ENCODE measurements at regions of chr15 and their contacts with region 1.

Region 1: GRCh38 chr15:58070801-58071418 is 5.4 kb upstream of the ALDH1A2 start:
- DNase-seq: peak; percentile 68
- ATAC-seq: no peak

Region 2: DNA sequence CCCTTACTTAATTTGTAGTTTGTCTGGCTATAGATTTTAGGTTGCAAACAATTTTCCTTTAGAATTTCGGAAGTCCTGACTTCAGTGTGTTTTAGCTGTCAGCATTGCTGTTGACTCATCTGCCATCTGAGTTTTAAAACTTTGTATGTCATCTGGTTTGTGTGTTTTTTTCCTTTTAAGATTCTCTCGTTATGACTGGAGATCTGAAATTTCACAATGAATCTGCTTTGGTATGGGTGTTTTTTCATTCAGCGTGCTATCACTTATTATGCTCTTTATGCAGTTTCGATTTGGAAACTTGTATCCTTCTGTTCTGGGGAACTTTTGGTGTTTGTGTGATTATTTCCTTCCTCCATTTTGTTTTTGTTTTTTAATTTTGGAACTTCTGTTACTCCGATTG is 1283.9 kb before region 1 on chr15:
- intact Hi-C with region 1: no loop called
- DNase-seq: no peak
- ATAC-seq: no peak

Region 3: DNA sequence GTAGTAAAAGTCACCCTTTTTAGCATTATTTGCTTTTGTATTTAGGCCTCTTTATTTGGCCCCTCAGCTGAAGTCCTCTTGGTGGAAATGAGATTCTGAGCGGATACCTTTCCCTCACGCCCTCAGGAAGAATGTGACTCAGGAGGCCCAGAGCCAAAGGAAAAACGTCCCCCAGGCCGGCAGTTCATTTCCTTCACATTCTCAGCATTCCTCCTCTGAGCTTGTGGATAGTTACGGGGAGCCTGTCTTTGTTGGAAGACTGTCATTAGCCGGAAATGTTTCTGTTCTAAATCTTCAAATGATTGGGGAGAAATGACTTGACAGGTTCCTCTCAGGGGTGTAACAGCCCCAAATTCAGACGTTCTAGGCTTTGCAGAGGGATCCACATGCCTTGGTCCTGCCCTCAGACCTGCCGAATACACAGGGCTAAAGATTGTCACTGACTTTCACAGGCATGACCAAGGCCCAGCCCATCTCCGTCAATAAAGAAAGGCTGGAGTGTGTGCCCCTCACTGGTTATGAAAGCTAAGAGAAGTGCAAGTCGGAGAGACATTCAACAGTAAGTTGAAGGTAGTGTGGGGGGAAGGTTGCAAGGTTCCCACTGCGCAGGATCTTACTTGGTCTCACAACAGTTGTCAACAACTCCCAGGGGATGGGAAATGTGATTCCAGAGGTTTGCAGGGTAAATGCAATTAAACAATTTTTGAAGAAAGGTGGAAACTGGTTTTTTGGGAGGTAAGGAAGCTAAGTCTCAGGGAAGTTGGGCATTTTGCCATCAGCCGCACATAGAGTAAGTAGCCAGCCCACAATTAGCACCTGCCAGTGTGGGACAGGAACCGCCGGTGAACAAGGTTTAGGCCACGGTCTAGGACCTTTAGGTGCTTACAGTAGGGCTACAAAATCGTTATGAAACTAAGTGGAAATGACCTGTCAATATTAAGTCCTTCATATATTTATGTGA is 518.9 kb before region 1 on chr15:
- intact Hi-C with region 1: loop called (anchors 5 kb)
- DNase-seq: no peak
- ATAC-seq: no peak

Region 4: DNA sequence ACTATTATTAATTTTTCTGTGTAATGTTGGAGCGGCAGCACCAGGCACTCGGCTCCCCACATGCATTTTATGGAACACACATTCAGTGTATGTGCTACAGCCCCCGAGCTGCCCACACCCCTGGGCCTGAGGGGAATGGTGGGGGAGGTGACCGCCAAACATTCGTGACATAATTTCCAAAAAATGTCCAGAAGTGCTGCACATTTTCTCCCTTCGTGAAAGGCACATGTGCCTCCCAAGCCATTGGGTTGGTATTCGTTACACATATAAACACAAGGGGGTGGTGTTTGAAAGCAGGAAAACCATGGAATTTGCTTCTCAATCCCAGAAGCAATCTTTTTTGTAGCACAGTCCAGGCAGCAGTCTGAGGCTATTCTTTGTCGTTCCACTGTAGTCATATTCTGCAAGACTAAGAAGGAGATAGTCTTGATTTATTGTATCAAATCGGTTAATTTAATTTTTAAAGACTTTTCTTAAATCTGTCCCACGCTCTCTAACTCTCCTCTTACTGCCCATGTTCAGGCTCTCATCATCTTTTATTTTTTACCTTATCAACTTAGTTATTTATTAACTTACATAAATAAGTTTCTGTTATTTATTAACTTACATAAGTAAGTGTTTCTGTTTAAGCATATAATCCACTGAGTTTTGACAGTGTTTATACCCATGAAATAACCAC is 403.6 kb before region 1 on chr15:
- intact Hi-C with region 1: loop called (anchors 10 kb)
- DNase-seq: no peak
- ATAC-seq: peak; percentile 73

Region 5: DNA sequence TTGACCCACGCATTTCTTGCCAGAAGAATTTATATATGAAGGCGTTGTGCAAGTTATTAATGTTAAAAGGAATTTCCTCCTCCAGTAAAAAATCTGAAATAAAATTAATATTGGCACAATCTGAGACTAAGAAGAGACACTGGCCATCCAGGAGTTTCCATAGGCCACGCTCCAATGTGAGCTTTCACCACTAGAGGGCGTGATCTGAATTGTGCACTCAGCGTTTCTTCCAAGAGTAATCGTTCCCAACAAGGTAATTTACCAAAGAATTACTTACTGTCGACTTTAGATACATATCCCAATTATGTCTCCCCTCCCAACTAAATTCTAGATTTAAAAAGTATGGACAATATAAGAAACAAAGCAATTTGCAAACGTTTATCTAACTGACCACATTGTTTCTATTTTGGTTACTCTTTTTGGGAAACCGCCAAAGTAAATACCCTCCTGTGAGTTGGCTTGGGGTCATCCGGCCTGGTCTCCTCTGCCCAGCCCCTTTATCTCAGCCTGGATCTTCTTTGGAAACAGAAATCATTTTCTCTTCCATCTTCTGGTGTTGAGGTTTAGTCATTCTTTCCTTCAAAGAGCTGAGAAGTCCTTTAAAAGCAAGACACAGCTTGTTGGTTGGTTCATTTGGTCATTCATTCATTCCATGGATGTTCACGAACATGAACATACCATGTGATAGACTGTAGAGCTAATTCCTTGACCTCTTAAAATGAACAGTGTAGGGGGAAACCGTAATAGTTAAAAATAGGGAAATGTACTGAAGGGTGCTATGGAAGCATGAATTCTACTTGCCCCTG is 338.2 kb before region 1 on chr15:
- intact Hi-C with region 1: loop called (anchors 5 kb)
- DNase-seq: no peak
- ATAC-seq: no peak

Region 6: GRCh38 chr15:57751177-57751800 is 319.6 kb before region 1 on chr15:
- intact Hi-C with region 1: loop called (anchors 2 kb)
- DNase-seq: no peak
- ATAC-seq: peak; percentile 56

Region 7: DNA sequence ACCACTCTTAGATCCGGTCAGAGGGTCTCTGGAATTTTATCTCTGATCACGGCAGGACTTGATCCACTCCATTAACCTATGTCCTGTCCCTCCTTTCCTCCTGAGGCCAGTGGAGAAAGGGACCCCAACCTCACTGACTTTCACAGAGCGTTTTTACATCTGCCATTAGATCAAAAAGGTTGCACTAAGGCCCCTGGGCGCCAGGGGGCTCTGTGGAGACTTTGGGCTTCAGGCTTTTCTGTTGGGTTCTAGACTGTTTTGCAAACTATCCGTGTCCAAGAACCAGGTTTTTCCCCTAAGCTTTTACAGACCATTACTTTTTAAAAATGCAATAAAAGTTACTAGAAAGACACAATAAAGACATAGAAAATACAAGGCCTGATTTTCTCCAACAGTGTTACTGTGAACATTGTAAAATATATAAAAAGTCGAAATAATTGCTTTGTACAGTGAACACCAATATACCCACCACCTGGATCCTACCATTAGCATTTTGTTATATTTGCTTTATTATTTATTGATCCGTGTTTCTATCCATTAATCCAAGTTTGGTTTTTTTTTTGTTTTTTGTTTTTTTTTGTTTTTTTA is 204.7 kb before region 1 on chr15:
- intact Hi-C with region 1: loop called (anchors 2 kb)
- DNase-seq: peak; percentile 69
- ATAC-seq: peak; percentile 20

Region 8: GRCh38 chr15:57923306-57923705 is 147.6 kb before region 1 on chr15:
- intact Hi-C with region 1: loop called (anchors 5 kb)
- DNase-seq: no peak
- ATAC-seq: peak; percentile 85

Region 9: DNA sequence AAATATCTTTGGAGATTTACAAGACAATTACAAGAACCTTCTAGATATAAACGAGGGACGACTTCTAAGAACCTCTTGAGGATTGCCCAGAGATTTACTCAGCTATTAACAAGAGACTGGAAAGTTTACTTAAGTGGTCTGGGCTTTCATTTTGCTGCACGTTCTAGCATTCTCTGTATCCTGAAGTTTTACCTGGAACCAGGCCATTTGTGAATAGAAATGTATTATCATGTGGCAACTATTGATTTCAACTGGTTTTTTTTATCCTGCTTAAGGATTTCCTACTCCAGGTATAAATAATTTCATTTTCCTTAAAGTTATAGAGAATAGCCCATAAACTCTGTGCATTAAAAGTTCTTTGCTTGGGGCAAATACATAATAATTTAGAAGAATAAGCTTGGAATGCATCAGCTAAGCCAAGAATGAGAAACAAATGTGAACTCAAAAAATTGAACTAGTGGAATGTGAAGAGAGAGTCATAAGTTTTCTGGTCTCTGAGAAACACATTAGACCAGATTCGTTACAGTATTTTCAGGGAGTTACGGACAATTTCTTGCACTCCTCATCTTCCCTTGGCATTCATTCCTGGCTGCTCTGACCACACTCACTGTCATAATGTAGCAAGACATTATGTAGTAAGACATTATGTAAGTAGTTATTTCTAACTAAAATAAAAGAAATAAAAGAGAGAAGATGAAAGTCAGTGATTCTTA is 68.5 kb after region 1 on chr15:
- intact Hi-C with region 1: no loop called
- DNase-seq: no peak
- ATAC-seq: no peak